HEK293T (cell line): ENCODE measurements at regions of chr14 and their contacts with region 1.

Region 1: GRCh38 chr14:100192672-100193416 is 33.4 kb upstream of the DEGS2 start:
- DNase-seq: peak; percentile 99

Region 2: DNA sequence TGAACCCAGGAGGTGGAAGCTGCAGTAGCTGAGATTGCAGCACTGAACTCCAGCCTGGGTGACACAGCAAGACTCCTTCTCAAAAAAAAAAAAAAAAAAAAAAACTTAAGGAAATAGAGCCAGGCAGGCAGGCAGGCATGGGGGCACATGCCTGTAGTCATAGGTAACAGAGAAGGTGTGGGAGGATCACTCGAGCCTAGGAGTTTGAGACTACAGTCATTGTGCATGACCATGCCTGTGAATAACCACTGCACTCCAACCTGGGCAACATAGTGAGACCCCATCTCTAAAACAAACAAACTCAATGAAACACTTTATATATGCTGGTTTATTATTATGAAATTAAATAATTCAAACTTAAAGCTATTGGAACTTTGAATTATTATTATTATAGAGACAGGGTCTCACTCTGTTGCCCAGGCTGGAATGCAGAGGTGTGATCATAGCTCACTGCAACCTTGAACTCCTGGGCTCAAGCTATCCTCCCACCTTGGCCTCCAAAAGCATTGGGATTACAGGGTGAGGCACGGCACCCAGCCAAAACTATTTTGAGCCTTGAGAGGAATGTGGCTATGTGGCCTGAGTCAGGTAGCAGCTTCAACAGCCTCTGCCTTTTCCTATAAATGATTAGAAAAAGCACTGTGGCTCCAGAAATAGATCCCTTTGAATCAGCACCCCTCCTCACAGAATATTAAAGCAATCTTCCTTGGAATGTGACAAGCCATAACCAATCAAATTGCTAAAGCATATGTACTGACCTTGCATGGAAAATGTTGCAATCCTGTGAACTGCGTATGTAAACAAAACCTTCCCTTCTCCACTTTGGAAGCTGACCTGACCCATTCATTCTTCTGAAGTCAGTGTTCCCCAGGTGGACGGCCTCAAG is 11.3 kb after region 1 on chr14:
- CTCF ChIA-PET with region 1: interaction called, 10 read pairs
- POLR2A ChIA-PET with region 1: interaction called, 5 read pairs
- DNase-seq: no peak

Region 3: GRCh38 chr14:100213956-100214774 is 21.3 kb after region 1 on chr14:
- CTCF ChIA-PET with region 1: interaction called, 5 read pairs
- POLR2A ChIA-PET with region 1: interaction called, 19 read pairs
- DNase-seq: peak; percentile 94

Region 4: DNA sequence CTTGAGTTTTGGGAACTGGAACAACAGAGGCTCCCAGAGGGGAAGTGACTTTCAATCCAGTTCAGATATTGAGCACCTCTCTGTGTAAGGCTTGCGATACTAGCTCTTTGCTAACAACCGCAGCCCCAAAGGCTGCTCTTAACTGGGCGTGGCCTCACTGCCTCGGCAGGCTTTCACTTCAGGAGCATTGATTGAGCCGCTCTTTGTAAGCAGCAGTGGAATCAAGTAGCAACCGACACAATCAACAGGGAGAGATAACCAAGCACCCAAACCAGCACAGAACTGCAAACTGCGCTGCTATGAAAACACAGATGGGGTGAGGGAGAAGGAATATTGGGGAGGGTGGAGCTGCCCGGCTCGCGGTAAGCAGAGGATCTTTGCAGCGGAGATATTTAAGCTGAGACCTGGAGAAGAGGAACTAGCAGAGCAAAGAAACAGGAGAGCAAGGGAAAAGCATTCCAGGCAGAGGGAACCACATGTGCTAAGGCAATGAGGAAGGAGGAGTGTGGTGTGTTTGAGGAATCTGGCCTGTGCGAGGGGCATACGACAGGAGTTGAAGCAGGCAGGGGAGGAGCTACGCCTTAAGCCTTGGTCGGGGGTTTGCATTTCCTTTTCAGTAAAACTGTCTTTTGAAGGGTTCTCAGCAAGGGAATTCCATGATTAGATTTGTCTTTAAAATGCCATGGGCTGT is 28.8 kb after region 1 on chr14:
- CTCF ChIA-PET with region 1: interaction called, 5 read pairs
- POLR2A ChIA-PET with region 1: interaction called, 19 read pairs
- DNase-seq: peak; percentile 54